Gastrocnemius medialis (tissue), 4 donors: ENCODE measurements at regions of chr9 and their contacts with region 1.

Region 1: DNA sequence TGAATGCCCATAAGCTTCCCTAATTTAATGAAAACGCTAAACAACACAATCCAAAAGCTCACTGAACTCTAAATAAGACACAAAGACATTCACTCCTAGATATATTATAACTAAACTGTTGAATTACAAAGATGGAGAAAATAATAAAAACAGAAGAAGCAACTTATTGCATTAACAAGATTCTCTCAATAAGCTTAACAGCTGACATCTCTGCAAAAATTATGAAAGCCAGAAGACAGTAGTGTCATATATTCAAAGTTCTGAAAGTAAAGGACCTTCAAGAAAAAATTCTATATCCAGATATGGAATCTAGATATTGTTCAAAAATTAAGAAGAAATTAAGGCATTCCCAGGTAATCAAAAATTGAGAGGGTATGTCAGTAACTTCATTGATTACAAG is 957.8 kb upstream of the TYRP1 start:
- DNase-seq: no peak
- ATAC-seq: no peak
- H3K4me3 ChIP-seq: no peak overlapping the region
- H3K27ac ChIP-seq: no peak overlapping the region
- H3K4me1 ChIP-seq: no peaks in the 10 kb centered on the region
- H3K27me3 ChIP-seq: no peaks in the 10 kb centered on the region
- CTCF ChIP-seq: no peak
- POLR2A ChIP-seq: no peak

Region 2: GRCh38 chr9:11749396-11749795 is 14.0 kb after region 1 on chr9:
- in situ Hi-C with region 1: no loop called
- intact Hi-C with region 1: loop called (anchors 1 kb)
- DNase-seq: no peak
- ATAC-seq: no peak
- H3K4me3 ChIP-seq: no peak overlapping the region
- H3K27ac ChIP-seq: no peak overlapping the region
- H3K4me1 ChIP-seq: no peaks in the 10 kb centered on the region
- H3K27me3 ChIP-seq: no peaks in the 10 kb centered on the region
- CTCF ChIP-seq: no peak
- POLR2A ChIP-seq: no peak